Activated B cell treated with CpG ODN at 0.5 μM for 24 hours (primary cell): ENCODE measurements at regions of chr2 and their contacts with region 1.

Region 1: GRCh38 chr2:112254466-112255239 is at the start of gene ZC3H8:
- DNase-seq: peak; percentile 96
- ATAC-seq: peak; percentile 91
- H3K4me3 Mint-ChIP-seq: peak within 1 kb of the TSS; percentile 90
- H3K27ac Mint-ChIP-seq: peak within 1 kb of the TSS; percentile 95
- H3K4me1 Mint-ChIP-seq: peaks cover 11% of the 10 kb centered on the region
- H3K27me3 Mint-ChIP-seq: no peaks in the 10 kb centered on the region
- CTCF ChIP-seq: no peak
- total RNA-seq, gene ZC3H8: 17.2 and 25.7 TPM in 2 replicates

Region 2: DNA sequence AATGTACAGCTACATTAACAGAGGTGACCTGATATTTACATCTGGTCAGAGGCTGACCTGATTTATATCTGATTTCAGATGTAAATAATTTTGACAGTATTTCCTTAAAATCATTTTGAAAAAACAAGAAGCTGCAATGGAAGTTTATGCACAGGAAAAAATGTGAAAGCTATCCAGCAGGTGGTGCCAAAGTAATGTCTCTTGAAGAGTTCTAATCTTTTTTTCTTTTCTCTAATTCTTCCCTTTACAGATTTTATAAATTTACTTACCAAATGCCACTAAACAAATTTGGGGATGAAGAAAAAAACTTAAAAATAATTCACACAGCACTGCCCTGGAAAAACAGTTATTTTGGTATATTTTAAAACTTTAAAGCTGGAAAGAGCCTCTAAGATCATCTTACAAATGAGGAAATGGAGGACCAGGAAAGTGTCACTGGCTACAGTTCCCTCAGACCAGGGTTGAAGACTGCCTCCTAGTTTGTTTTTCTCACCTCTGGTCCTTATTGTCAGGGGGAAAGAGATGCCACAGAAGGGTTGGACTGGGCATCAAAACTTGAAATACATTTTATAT is 132.9 kb before region 1 on chr2:
- CTCF ChIA-PET with region 1: interaction called, 14 read pairs
- POLR2A ChIA-PET with region 1: interaction called, 4 read pairs
- intact Hi-C with region 1: loop called (anchors 5 kb)
- DNase-seq: no peak
- ATAC-seq: no peak
- H3K4me3 Mint-ChIP-seq: no peak overlapping the region
- H3K27ac Mint-ChIP-seq: no peak overlapping the region
- H3K4me1 Mint-ChIP-seq: peaks cover 1% of the 10 kb centered on the region
- H3K27me3 Mint-ChIP-seq: no peaks in the 10 kb centered on the region
- CTCF ChIP-seq: peak; percentile 47

Region 3: DNA sequence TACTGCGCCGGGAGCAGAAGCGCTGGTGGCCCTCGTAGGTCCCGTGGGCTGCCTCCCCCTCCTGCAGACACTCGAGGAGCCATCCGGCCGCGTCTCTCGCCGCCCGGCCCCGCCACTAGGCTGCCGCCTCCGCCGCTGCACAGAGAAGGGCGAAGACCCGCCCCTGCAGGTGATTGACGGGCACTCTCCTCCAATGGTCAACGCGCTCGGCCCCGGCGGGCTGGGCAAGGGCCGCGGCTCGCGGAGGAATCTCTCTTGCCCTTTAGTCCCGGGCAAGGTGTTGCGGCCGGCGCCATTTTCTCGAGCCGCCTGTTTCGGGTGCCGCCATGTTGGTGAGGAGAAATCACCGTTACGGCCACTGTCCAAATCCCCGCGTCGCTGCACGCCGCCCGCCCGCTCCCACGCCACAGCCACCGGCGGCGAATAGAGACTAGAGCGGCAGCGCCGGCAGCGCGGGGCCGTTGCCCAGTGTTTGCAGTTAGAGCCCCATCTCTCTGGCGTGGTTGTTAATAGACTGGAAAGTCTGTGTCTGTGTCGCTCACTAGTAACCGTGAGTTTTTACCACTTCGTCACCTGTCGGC is 20.7 kb after region 1 on chr2 and contains the start of gene ZC3H6:
- CTCF ChIA-PET with region 1: interaction called, 8 read pairs
- POLR2A ChIA-PET with region 1: interaction called, 37 read pairs
- intact Hi-C with region 1: loop called (anchors 1 kb)
- DNase-seq: peak; percentile 100
- ATAC-seq: peak; percentile 88
- H3K4me3 Mint-ChIP-seq: peak within 1 kb of the TSS; percentile 95
- H3K27ac Mint-ChIP-seq: peak within 1 kb of the TSS; percentile 99
- H3K4me1 Mint-ChIP-seq: peaks cover 17% of the 10 kb centered on the region
- H3K27me3 Mint-ChIP-seq: no peaks in the 10 kb centered on the region
- CTCF ChIP-seq: no peak
- total RNA-seq, gene ZC3H6: 7.0 and 7.3 TPM in 2 replicates

Region 4: GRCh38 chr2:112321375-112322320 is 67.0 kb after region 1 on chr2:
- CTCF ChIA-PET with region 1: no interaction called
- POLR2A ChIA-PET with region 1: no interaction called
- intact Hi-C with region 1: loop called (anchors 5 kb)
- DNase-seq: no peak
- ATAC-seq: no peak
- H3K4me3 Mint-ChIP-seq: no peak overlapping the region
- H3K27ac Mint-ChIP-seq: no peak overlapping the region
- H3K4me1 Mint-ChIP-seq: no peaks in the 10 kb centered on the region
- H3K27me3 Mint-ChIP-seq: no peaks in the 10 kb centered on the region
- CTCF ChIP-seq: no peak

Region 5: GRCh38 chr2:112481050-112481527 is 226.4 kb after region 1 on chr2:
- CTCF ChIA-PET with region 1: interaction called, 3 read pairs
- POLR2A ChIA-PET with region 1: interaction called, 5 read pairs
- intact Hi-C with region 1: loop called (anchors 1 kb)
- DNase-seq: peak; percentile 71
- ATAC-seq: peak; percentile 73
- H3K4me3 Mint-ChIP-seq: peak overlapping the region; percentile 98
- H3K27ac Mint-ChIP-seq: peak overlapping the region; percentile 97
- H3K4me1 Mint-ChIP-seq: peaks cover 22% of the 10 kb centered on the region
- H3K27me3 Mint-ChIP-seq: no peaks in the 10 kb centered on the region
- CTCF ChIP-seq: no peak

Region 6: DNA sequence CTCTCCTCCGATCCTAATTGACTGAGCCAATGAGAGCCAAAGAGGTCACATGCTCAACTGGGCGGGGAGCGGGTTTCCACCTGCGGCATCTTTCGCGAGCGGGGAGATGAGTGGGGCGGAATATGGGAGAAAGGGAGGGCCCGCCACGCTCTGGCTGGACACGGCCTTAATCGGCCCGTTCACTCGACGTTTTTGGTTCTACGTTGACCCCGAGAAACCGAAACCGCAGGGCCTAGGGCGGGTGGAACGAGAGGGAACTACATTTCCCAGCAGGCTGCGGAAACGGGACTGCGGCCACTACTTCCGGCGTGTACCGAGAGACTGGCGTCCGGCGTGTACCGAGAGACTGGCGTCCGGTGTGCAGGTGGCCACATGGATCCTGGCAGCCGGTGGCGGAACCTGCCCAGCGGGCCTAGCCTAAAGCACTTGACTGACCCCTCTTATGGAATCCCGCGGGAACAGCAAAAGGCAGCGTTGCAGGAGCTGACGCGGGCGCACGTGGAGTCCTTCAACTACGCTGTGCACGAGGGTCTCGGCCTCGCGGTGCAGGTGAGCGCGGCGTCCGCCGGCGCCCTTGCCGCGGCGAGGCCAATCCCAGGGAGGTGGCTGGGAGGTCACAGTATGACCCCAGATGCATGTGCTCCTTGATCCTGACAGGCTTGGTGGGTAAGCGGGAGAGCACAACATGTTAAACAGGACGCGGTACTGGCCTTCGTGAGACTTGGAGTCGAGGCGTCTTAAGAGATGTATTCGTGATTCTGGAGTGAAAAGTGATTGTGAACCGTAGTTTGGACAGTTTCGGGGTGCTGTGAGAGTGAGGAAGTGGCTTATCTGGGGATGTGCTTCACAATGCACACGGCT is 287.7 kb after region 1 on chr2 and contains the start of gene POLR1B:
- CTCF ChIA-PET with region 1: no interaction called
- POLR2A ChIA-PET with region 1: no interaction called
- intact Hi-C with region 1: loop called (anchors 1 kb)
- DNase-seq: peak; percentile 72
- ATAC-seq: peak; percentile 77
- H3K4me3 Mint-ChIP-seq: no peak within 1 kb of the TSS
- H3K27ac Mint-ChIP-seq: no peak within 1 kb of the TSS
- H3K4me1 Mint-ChIP-seq: peaks cover 19% of the 10 kb centered on the region
- H3K27me3 Mint-ChIP-seq: no peaks in the 10 kb centered on the region
- CTCF ChIP-seq: no peak
- total RNA-seq, gene POLR1B: 43.1 and 48.8 TPM in 2 replicates

Region 7: GRCh38 chr2:112584134-112584890 is 329.7 kb after region 1 on chr2 and contains the start of gene CHCHD5:
- CTCF ChIA-PET with region 1: no interaction called
- POLR2A ChIA-PET with region 1: no interaction called
- intact Hi-C with region 1: loop called (anchors 5 kb)
- DNase-seq: peak; percentile 84
- ATAC-seq: peak; percentile 85
- H3K4me3 Mint-ChIP-seq: peak within 1 kb of the TSS; percentile 96
- H3K27ac Mint-ChIP-seq: peak within 1 kb of the TSS; percentile 96
- H3K4me1 Mint-ChIP-seq: peaks cover 35% of the 10 kb centered on the region
- H3K27me3 Mint-ChIP-seq: no peaks in the 10 kb centered on the region
- CTCF ChIP-seq: no peak
- total RNA-seq, gene CHCHD5: 26.0 and 28.4 TPM in 2 replicates